Posterior cingulate gyrus (tissue), 11 donors: ENCODE measurements at regions of chr14 and their contacts with region 1.

Region 1: DNA sequence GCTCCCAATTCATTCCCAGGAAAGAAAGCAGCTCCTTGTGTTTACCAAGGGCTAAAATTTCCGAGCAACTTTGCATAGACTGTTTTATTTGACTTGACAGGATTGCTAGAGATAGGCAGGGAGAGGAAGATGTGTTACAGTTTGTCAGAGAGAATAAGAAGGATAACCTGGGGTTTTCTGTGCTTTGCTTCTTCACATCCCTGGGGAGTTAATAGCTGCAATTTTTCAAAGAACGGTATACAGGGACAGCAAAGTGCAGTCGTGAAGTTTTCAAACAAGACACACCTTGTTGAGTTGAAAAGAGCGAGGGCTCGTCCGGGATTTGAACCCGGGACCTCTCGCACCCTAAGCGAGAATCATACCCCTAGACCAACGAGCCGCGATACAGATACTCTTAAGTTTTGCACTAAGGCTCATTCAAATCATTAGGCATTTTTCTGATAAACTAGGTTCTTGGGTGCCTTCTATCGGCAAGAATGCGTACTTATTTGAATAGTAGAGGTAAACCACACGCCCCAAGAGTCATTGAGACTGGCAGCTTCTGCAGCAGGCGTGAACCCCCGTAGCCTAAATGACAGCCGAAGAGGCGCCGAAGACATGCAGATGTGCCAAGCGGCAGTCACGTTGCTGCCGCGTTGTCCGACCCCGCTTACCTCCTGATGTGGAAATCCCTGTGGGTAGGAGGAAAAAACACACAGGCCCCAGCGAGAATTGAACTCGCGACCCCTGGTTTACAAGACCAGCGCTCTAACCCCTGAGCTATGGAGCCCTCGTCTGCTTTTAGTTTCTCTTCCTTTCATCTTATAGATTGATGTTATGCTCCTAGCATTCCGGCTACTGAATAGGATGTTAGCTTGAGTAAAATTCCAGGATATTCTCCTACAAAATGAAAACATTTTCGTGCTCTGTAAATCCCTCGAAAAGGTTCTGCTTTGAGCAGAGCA is 22.2 kb upstream of the RNASE12 start:
- DNase-seq: peak; percentile 59 to 97 (median 67)

Region 2: DNA sequence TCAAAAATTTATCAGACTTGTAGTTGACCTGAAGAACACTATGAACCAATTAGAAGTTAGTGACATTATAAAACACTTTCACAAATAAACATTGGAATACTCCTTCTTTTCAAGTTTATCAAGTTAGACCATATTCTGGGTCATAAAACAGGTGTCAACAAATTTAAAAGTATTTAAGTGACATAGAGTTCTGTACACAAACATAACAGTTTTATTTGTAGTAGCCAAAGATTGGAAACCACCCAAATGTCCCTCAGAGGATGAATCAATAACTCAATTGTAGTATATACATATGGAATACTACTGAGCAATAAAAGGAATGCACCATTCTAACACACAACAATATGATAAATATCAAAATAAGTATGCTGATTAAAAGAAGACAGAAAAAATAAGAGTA is 446.3 kb before region 1 on chr14:
- intact Hi-C with region 1: no loop called
- DNase-seq: no peak

Region 3: DNA sequence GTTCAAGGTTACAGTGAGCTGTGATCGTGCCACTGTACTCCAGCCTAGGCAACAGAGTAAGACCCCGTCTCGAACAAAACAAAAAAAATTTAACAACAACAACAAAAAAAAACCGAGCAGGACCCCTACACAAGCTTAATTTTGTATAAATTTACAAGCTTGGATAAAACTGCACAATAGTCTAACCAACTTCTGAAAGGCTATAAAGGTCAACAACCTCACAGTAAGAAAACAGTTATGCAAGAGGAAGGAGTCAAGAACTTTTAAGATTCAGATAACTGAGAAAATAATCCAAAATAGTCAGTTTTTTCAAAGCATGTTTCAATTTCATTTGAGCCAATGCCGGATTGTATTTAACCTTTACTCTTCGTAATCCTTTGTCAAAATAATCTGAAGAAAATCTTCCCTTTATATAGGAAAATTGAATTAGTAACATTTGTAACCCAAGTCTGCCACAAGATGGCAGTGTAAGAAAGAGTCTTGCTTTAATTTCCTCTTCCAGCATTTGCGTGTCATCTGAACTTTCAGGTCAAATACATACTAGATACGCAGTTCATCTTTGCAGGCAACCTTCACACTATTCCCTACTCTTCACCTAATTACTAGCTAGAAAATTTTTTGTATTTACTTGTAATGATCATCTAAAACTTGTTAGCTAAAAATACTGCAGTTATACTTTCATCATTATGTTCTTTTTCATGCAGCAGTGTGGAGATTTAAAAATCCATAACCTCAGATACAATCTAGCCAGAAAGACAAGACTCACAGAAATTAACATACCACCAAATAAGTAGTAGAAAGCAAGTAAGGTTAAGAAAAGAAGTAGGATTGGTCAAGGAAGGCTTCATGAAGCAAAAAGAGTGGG is 286.1 kb before region 1 on chr14:
- intact Hi-C with region 1: loop called (anchors 1 kb)
- DNase-seq: no peak

Region 4: DNA sequence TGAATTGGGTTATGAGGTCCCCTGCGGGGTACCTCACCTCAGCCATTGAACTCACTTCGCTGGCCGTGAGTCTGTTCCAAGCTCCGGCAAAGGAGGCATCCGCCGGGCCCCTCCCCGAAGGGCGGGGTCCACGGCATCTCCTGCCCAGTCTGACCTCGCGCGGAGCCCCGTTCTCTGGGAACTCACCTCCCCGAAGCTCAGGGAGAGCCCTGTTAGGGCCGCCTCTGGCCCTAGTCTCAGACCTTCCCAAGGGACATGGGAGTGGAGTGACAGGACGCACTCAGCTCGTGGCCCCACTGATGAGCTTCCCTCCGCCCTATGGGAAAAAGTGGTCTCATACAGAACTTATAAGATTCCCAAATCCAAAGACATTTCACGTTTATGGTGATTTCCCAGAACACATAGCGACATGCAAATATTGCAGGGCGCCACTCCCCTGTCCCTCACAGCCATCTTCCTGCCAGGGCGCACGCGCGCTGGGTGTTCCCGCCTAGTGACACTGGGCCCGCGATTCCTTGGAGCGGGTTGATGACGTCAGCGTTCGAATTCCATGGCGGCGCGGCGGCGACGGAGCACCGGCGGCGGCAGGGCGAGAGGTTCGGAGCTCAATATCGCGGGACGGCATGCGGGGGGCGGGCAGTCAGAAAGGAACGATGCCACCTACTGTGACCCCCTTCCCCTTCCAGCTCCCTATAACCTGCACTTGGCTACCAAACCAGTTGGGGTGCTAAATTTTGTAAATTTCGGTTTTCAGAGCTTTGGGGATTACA is 270.1 kb before region 1 on chr14 and contains the start of gene PARP2:
- intact Hi-C with region 1: loop called (anchors 1 kb)
- DNase-seq: peak; percentile 95 to 100 (median 96)

Region 5: GRCh38 chr14:20413045-20413799 is 200.1 kb before region 1 on chr14 and contains the start of gene TEP1:
- intact Hi-C with region 1: loop called (anchors 2 kb)
- DNase-seq: peak; percentile 63 to 96 (median 80)

Region 6: DNA sequence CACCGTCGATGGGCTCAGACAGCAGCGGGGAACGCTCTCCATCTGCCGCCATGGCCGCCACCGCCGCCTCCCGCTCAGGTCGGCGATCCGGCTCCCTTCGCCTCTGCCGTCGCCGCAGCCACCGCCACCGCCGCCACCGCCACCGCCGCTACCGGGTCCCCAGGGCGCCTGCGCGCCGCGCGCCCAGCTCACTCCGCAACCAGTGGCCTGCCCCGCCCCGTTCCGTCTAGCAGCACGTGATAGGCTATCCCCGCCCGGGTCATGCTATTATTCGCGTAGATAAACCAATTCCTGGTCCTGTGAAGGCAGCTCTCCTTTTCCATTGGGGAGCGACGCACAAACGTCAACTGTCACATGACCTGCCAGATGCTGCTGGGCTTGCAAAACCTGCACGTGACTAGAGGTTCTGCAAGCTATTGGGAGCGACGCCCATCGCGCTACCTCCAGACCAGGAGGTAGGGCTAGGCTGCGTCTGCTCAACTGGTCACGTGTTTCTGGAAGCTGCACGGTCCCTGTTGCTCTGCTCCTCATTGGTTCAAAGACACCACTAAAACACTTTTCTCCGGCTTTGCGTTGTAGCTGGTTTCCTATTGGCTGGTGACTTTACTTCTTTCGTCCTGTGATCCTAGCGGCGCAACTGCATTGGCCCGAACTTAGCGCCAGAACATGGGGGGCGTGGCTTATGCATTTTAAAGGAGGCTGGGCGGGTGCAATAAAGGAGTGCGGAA is 151.9 kb before region 1 on chr14 and contains the start of gene PIP4P1:
- intact Hi-C with region 1: loop called (anchors 5 kb)
- DNase-seq: peak; percentile 98 to 100 (median 99)

Region 7: GRCh38 chr14:20530771-20531571 is 82.4 kb before region 1 on chr14:
- intact Hi-C with region 1: loop called (anchors 1 kb)
- DNase-seq: peak in 7 of 10 donors; percentile 36 to 88 (median 57)

Region 8: DNA sequence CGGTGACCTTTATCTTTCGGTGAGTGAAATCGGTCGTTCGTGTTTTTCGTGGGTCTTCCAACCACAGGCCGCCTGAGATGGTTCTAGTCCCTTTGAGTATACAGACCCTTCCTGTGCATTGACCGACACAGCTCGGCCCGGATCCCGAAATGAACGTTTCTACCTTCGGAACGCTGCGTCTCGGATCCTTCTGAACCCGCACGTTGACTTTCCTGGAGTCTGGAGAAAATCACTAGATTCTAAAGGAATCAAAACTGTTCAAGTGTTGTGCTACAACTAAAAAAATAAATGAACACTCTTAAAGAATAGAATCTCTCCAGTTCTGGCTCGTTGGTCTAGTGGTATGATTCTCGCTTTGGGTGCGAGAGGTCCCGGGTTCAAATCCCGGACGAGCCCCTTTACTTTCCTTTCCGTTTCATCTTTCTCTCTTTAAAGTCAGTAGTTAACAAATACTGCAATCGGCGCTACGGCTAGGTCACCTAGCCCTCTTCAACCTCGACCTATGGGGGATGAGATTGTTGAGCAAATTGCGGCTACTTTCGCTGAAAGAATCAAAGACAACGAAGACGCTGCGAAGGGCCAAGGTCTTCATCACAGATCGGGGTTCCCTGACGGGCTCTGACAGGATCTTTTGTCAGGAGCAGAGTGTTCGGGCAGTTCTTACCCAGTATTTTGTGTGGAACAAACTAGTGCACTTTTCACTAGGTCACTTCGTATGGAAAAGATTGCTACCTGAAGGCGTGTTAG is 19.5 kb after region 1 on chr14:
- intact Hi-C with region 1: loop called (anchors 1 kb)
- DNase-seq: peak in 3 of 10 donors; percentile 27 to 85 (median 39)